Panc1 (cell line): ENCODE measurements at regions of chr7 and their contacts with region 1.

Region 1: GRCh38 chr7:150962553-150963399 is 15.3 kb downstream of the KCNH2 start:
- DNase-seq: no peak
- ATAC-seq: peak; percentile 92
- H3K4me3 ChIP-seq: no peak overlapping the region
- H3K27ac ChIP-seq: no peak overlapping the region
- H3K4me1 ChIP-seq: peaks cover 3% of the 10 kb centered on the region
- H3K27me3 ChIP-seq: no peaks in the 10 kb centered on the region
- CTCF ChIP-seq: peak; percentile 98

Region 2: GRCh38 chr7:151008511-151009323 is 45.9 kb after region 1 on chr7:
- CTCF ChIA-PET with region 1: interaction called, 16 read pairs
- POLR2A ChIA-PET with region 1: no interaction called
- in situ Hi-C with region 1: no loop called
- intact Hi-C with region 1: no loop called
- DNase-seq: no peak
- ATAC-seq: peak; percentile 85
- H3K4me3 ChIP-seq: peak overlapping the region; percentile 5 to 41; a peak in 2 of 4 replicates
- H3K27ac ChIP-seq: peak overlapping the region; percentile 12; the same call in 1 of the 2 replicates
- H3K4me1 ChIP-seq: peaks cover 34% of the 10 kb centered on the region
- H3K27me3 ChIP-seq: no peaks in the 10 kb centered on the region
- CTCF ChIP-seq: peak; percentile 97

Region 3: GRCh38 chr7:151017953-151018420 is 55.2 kb after region 1 on chr7:
- CTCF ChIA-PET with region 1: interaction called, 12 read pairs
- POLR2A ChIA-PET with region 1: no interaction called
- in situ Hi-C with region 1: no loop called
- intact Hi-C with region 1: loop called (anchors 5 kb)
- DNase-seq: no peak
- ATAC-seq: peak; percentile 88
- H3K4me3 ChIP-seq: peak overlapping the region; percentile 7 to 52; a peak in 3 of 4 replicates
- H3K27ac ChIP-seq: no peak overlapping the region
- H3K4me1 ChIP-seq: peaks cover 8% of the 10 kb centered on the region; the same call in 1 of the 2 replicates
- H3K27me3 ChIP-seq: no peaks in the 10 kb centered on the region
- CTCF ChIP-seq: peak; percentile 99